Activated B cell treated with CpG ODN at 0.5 μM for 24 hours (primary cell): ENCODE measurements at regions of chr2 and their contacts with region 1.

Region 1: DNA sequence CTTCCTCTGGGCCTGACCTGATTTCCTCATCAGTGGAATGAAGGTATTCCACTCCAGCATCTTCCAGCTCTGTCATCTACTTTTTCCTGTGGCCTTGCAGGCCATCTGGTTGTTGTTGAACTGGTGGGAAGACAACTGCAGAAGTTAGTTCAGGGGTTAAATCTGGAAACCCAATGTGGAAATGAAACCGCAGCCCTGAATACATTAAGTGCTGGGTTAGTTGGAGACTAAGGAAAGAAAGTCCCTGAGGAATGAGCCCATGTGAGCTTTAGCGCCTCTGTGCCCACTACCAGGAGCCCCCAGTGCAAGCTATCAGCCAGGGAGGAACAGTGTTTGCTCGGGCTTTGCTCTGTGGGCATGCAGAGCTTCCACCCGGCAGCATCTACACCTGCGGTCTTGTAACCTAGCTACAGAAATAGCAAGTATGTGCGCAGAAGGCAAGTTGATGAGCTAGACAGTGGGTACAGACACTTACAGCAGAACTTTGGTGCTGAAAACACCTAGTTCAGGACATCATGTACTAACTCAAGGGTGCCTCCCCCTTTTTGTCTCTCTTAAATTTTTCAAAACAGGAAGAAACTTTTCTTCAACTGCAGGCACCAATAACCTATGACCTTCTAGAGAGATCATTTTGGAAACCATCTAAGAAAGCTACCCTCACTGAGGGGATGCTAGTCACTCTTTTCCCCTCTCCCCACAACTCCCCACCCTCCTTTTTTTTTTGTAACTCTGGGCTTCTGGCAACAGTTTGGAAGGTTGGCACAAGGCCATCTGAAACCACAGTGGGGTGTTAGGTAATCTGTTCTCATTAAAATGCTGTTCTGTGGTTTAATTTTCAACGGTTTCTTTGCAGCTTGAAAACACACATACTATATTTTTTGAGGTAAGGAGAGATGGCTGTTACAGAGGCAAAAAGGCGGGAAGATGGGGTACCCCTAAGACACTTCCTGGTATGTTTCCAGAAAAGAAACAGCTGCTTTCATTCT is 18.3 kb upstream of the CXCR4 start:
- DNase-seq: peak; percentile 52
- ATAC-seq: peak; percentile 48
- H3K4me3 Mint-ChIP-seq: peak overlapping the region; percentile 62
- H3K27ac Mint-ChIP-seq: peak overlapping the region; percentile 99
- H3K4me1 Mint-ChIP-seq: peaks cover 99% of the 10 kb centered on the region
- H3K27me3 Mint-ChIP-seq: no peaks in the 10 kb centered on the region
- CTCF ChIP-seq: no peak

Region 2: GRCh38 chr2:134739879-134740301 is 1396.3 kb before region 1 on chr2:
- CTCF ChIA-PET with region 1: no interaction called
- POLR2A ChIA-PET with region 1: no interaction called
- intact Hi-C with region 1: loop called (anchors 10 kb)
- DNase-seq: peak; percentile 62
- ATAC-seq: peak; percentile 88
- H3K4me3 Mint-ChIP-seq: peak overlapping the region; percentile 49
- H3K27ac Mint-ChIP-seq: peak overlapping the region; percentile 97
- H3K4me1 Mint-ChIP-seq: peaks cover 71% of the 10 kb centered on the region
- H3K27me3 Mint-ChIP-seq: no peaks in the 10 kb centered on the region
- CTCF ChIP-seq: no peak

Region 3: GRCh38 chr2:135985018-135985825 is 151.0 kb before region 1 on chr2 and contains the start of gene DARS1:
- CTCF ChIA-PET with region 1: interaction called, 3 read pairs
- POLR2A ChIA-PET with region 1: interaction called, 7 read pairs
- intact Hi-C with region 1: loop called (anchors 1 kb)
- DNase-seq: peak; percentile 80
- ATAC-seq: peak; percentile 86
- H3K4me3 Mint-ChIP-seq: peak within 1 kb of the TSS; percentile 95
- H3K27ac Mint-ChIP-seq: peak within 1 kb of the TSS; percentile 97
- H3K4me1 Mint-ChIP-seq: peaks cover 50% of the 10 kb centered on the region
- H3K27me3 Mint-ChIP-seq: no peaks in the 10 kb centered on the region
- CTCF ChIP-seq: no peak
- total RNA-seq, gene DARS1: 96.3 and 103 TPM in 2 replicates

Region 4: GRCh38 chr2:136059036-136059472 is 77.2 kb before region 1 on chr2:
- CTCF ChIA-PET with region 1: interaction called, 4 read pairs
- POLR2A ChIA-PET with region 1: interaction called, 12 read pairs
- intact Hi-C with region 1: loop called (anchors 2 kb)
- DNase-seq: no peak
- ATAC-seq: peak; percentile 63
- H3K4me3 Mint-ChIP-seq: peak overlapping the region; percentile 62
- H3K27ac Mint-ChIP-seq: peak overlapping the region; percentile 77
- H3K4me1 Mint-ChIP-seq: peaks cover 76% of the 10 kb centered on the region
- H3K27me3 Mint-ChIP-seq: no peaks in the 10 kb centered on the region
- CTCF ChIP-seq: no peak

Region 5: DNA sequence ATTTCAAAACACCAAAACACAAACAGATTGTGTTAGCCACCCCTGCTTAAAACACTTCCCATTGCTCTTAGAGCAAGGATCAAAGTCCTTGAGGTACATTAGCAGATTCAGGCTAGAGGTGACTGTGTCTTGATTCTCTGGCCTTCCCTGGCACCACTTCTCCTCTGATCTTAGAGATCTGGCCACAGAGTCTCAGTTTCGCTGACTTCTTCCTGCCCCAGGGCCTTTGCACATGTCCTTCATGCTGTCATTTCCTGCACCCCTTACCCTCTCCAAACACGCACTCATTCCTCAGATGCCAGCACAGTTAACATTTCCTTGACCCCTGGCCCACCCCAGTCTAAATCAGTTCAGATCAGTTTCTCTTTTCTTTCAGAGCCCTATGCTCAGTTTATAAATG is 35.2 kb before region 1 on chr2:
- CTCF ChIA-PET with region 1: no interaction called
- POLR2A ChIA-PET with region 1: no interaction called
- intact Hi-C with region 1: no loop called
- DNase-seq: no peak
- ATAC-seq: no peak
- H3K4me3 Mint-ChIP-seq: no peak overlapping the region
- H3K27ac Mint-ChIP-seq: no peak overlapping the region
- H3K4me1 Mint-ChIP-seq: no peaks in the 10 kb centered on the region
- H3K27me3 Mint-ChIP-seq: no peaks in the 10 kb centered on the region
- CTCF ChIP-seq: no peak

Region 6: DNA sequence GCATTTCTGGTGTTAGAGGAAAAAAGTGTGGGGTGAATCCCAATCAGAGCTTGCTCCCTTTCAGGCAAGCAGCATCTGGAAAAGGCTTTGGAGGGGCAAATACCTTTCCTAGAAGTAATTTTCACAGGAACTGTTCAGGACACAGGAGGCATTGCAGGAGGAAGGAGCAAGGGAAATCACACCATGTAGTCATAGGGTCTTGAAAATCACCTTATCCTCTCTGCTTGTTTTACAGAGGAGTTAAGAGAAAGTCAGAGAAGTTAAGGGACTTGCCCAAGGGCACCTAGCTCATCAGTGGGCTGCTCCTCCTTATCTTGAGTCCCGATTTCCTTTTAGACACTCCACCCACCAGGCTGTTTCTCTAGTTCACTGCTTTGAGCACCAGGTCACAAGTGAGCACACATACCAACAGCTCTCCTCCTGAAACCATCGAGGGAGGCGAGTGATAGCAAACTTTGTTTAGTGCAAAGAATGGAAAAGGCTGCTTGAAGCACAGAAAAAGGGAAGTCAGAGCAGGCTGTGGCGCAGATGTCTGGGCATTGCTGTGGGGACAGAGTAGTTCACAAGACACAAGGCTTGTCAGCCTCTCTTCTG is 70.9 kb after region 1 on chr2:
- CTCF ChIA-PET with region 1: interaction called, 20 read pairs
- POLR2A ChIA-PET with region 1: interaction called, 248 read pairs
- intact Hi-C with region 1: loop called (anchors 1 kb)
- DNase-seq: peak; percentile 57
- ATAC-seq: peak; percentile 66
- H3K4me3 Mint-ChIP-seq: peak overlapping the region; percentile 71
- H3K27ac Mint-ChIP-seq: peak overlapping the region; percentile 97
- H3K4me1 Mint-ChIP-seq: peaks cover 78% of the 10 kb centered on the region
- H3K27me3 Mint-ChIP-seq: no peaks in the 10 kb centered on the region
- CTCF ChIP-seq: no peak

Region 7: GRCh38 chr2:136246086-136246669 is 110.0 kb after region 1 on chr2:
- CTCF ChIA-PET with region 1: no interaction called
- POLR2A ChIA-PET with region 1: interaction called, 204 read pairs
- intact Hi-C with region 1: no loop called
- DNase-seq: no peak
- ATAC-seq: peak; percentile 86
- H3K4me3 Mint-ChIP-seq: peak overlapping the region; percentile 35
- H3K27ac Mint-ChIP-seq: peak overlapping the region; percentile 76
- H3K4me1 Mint-ChIP-seq: peaks cover 65% of the 10 kb centered on the region
- H3K27me3 Mint-ChIP-seq: no peaks in the 10 kb centered on the region
- CTCF ChIP-seq: no peak

Region 8: GRCh38 chr2:136294059-136294458 is 157.8 kb after region 1 on chr2:
- CTCF ChIA-PET with region 1: no interaction called
- POLR2A ChIA-PET with region 1: no interaction called
- intact Hi-C with region 1: no loop called
- DNase-seq: no peak
- ATAC-seq: no peak
- H3K4me3 Mint-ChIP-seq: no peak overlapping the region
- H3K27ac Mint-ChIP-seq: no peak overlapping the region
- H3K4me1 Mint-ChIP-seq: no peaks in the 10 kb centered on the region
- H3K27me3 Mint-ChIP-seq: no peaks in the 10 kb centered on the region
- CTCF ChIP-seq: no peak

Region 9: GRCh38 chr2:136384531-136385303 is 248.5 kb after region 1 on chr2:
- CTCF ChIA-PET with region 1: interaction called, 9 read pairs
- POLR2A ChIA-PET with region 1: interaction called, 44 read pairs
- intact Hi-C with region 1: loop called (anchors 1 kb)
- DNase-seq: no peak
- ATAC-seq: peak; percentile 67
- H3K4me3 Mint-ChIP-seq: peak overlapping the region; percentile 33
- H3K27ac Mint-ChIP-seq: peak overlapping the region; percentile 94
- H3K4me1 Mint-ChIP-seq: peaks cover 50% of the 10 kb centered on the region
- H3K27me3 Mint-ChIP-seq: no peaks in the 10 kb centered on the region
- CTCF ChIP-seq: peak; percentile 38